CD8-positive, alpha-beta T cell (primary cell): ENCODE measurements at regions of chr21 and their contacts with region 1.

Region 1: GRCh38 chr21:33238565-33239255 is 9.0 kb downstream of the IFNAR2 start:
- DNase-seq: peak in 2 of 9 experiments; percentile 59 to 72
- ATAC-seq: peak; percentile 70
- H3K4me3 ChIP-seq: no peak overlapping the region
- H3K4me3 Mint-ChIP-seq: peak overlapping the region; percentile 49
- H3K27ac ChIP-seq: peak overlapping the region; percentile 28 to 82
- H3K27ac Mint-ChIP-seq: peak overlapping the region; percentile 87
- H3K4me1 ChIP-seq: peaks cover 88% of the 10 kb centered on the region
- H3K4me1 Mint-ChIP-seq: peaks cover 84% of the 10 kb centered on the region
- H3K27me3 ChIP-seq: no peaks in the 10 kb centered on the region
- H3K27me3 Mint-ChIP-seq: no peaks in the 10 kb centered on the region
- CTCF ChIP-seq: no peak

Region 2: DNA sequence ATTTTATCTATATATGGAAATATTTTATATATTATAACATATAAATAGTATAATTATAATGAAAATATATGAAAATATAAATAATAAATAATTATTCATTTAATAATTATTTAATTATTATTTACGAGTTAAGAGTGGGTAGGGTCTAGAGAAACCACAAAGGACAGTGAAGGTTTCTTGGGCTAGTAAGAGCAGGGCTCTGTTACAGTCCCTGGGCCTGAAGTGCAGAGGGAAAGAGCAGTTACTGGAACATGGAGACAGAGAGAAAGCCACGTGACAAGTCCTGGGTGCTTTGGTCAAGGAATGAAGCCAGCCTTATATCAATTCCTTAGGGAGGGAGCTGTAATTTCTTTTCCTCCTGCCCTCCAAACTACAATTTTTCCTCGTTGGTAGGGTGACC is 330.2 kb before region 1 on chr21:
- CTCF ChIA-PET with region 1: no interaction called
- POLR2A ChIA-PET with region 1: no interaction called
- intact Hi-C with region 1: no loop called
- DNase-seq: no peak
- ATAC-seq: no peak
- H3K4me3 ChIP-seq: no peak overlapping the region
- H3K4me3 Mint-ChIP-seq: no peak overlapping the region
- H3K27ac ChIP-seq: no peak overlapping the region
- H3K27ac Mint-ChIP-seq: no peak overlapping the region
- H3K4me1 ChIP-seq: no peaks in the 10 kb centered on the region
- H3K4me1 Mint-ChIP-seq: peaks cover under 1% of the 10 kb centered on the region
- H3K27me3 ChIP-seq: no peaks in the 10 kb centered on the region
- H3K27me3 Mint-ChIP-seq: no peaks in the 10 kb centered on the region
- CTCF ChIP-seq: no peak

Region 3: GRCh38 chr21:33205476-33205875 is 33.2 kb before region 1 on chr21:
- CTCF ChIA-PET with region 1: interaction called, 3 read pairs
- POLR2A ChIA-PET with region 1: no interaction called
- intact Hi-C with region 1: loop called in 1 of 2 experiments (anchors 2 kb)
- DNase-seq: peak in 4 of 9 experiments; percentile 31 to 76 (median 52)
- ATAC-seq: peak; percentile 43
- H3K4me3 ChIP-seq: peak overlapping the region in 1 of 2 experiments; percentile 15
- H3K4me3 Mint-ChIP-seq: peak overlapping the region; percentile 67
- H3K27ac ChIP-seq: peak overlapping the region; percentile 25 to 55
- H3K27ac Mint-ChIP-seq: peak overlapping the region; percentile 84
- H3K4me1 ChIP-seq: peaks cover 53% of the 10 kb centered on the region
- H3K4me1 Mint-ChIP-seq: peaks cover 62% of the 10 kb centered on the region
- H3K27me3 ChIP-seq: no peaks in the 10 kb centered on the region
- H3K27me3 Mint-ChIP-seq: no peaks in the 10 kb centered on the region
- CTCF ChIP-seq: no peak

Region 4: GRCh38 chr21:33278721-33279120 is 40.0 kb after region 1 on chr21:
- CTCF ChIA-PET with region 1: no interaction called
- POLR2A ChIA-PET with region 1: no interaction called
- intact Hi-C with region 1: no loop called
- DNase-seq: no peak
- ATAC-seq: no peak
- H3K4me3 ChIP-seq: no peak overlapping the region
- H3K4me3 Mint-ChIP-seq: no peak overlapping the region
- H3K27ac ChIP-seq: no peak overlapping the region
- H3K27ac Mint-ChIP-seq: no peak overlapping the region
- H3K4me1 ChIP-seq: no peaks in the 10 kb centered on the region
- H3K4me1 Mint-ChIP-seq: peaks cover 20% of the 10 kb centered on the region
- H3K27me3 ChIP-seq: no peaks in the 10 kb centered on the region
- H3K27me3 Mint-ChIP-seq: no peaks in the 10 kb centered on the region
- CTCF ChIP-seq: no peak